ENCODE measurements at regions of chr1 and their contacts with region 1.

Region 1: GRCh38 chr1:32716312-32717148 is 14.0 kb upstream of the SYNC start:
- DNase-seq: peak; percentile 99
- ATAC-seq: peak; percentile 95
- H3K4me3 Mint-ChIP-seq: peak overlapping the region; percentile 45
- H3K27ac Mint-ChIP-seq: peak overlapping the region; percentile 92
- H3K4me1 Mint-ChIP-seq: peaks cover 29% of the 10 kb centered on the region
- H3K27me3 Mint-ChIP-seq: peaks cover 3% of the 10 kb centered on the region
- CTCF ChIP-seq: no peak

Region 2: GRCh38 chr1:32695098-32695904 is 21.2 kb before region 1 on chr1:
- CTCF ChIA-PET with region 1: interaction called, 30 read pairs
- POLR2A ChIA-PET with region 1: no interaction called
- DNase-seq: no peak
- ATAC-seq: peak; percentile 32
- H3K4me3 Mint-ChIP-seq: no peak overlapping the region
- H3K27ac Mint-ChIP-seq: no peak overlapping the region
- H3K4me1 Mint-ChIP-seq: peaks cover 5% of the 10 kb centered on the region
- H3K27me3 Mint-ChIP-seq: peaks cover 2% of the 10 kb centered on the region
- CTCF ChIP-seq: no peak

Region 3: GRCh38 chr1:32733582-32734321 is 17.2 kb after region 1 on chr1:
- CTCF ChIA-PET with region 1: interaction called, 72 read pairs
- POLR2A ChIA-PET with region 1: interaction called, 6 read pairs
- DNase-seq: peak; percentile 49
- ATAC-seq: no peak
- H3K4me3 Mint-ChIP-seq: no peak overlapping the region
- H3K27ac Mint-ChIP-seq: no peak overlapping the region
- H3K4me1 Mint-ChIP-seq: peaks cover 18% of the 10 kb centered on the region
- H3K27me3 Mint-ChIP-seq: peaks cover 25% of the 10 kb centered on the region
- CTCF ChIP-seq: no peak

Region 4: GRCh38 chr1:32753532-32754312 is 37.2 kb after region 1 on chr1:
- CTCF ChIA-PET with region 1: interaction called, 65 read pairs
- POLR2A ChIA-PET with region 1: interaction called, 19 read pairs
- DNase-seq: peak; percentile 89
- ATAC-seq: peak; percentile 83
- H3K4me3 Mint-ChIP-seq: peak overlapping the region; percentile 92
- H3K27ac Mint-ChIP-seq: peak overlapping the region; percentile 92
- H3K4me1 Mint-ChIP-seq: peaks cover 45% of the 10 kb centered on the region
- H3K27me3 Mint-ChIP-seq: no peaks in the 10 kb centered on the region
- CTCF ChIP-seq: no peak

Region 5: DNA sequence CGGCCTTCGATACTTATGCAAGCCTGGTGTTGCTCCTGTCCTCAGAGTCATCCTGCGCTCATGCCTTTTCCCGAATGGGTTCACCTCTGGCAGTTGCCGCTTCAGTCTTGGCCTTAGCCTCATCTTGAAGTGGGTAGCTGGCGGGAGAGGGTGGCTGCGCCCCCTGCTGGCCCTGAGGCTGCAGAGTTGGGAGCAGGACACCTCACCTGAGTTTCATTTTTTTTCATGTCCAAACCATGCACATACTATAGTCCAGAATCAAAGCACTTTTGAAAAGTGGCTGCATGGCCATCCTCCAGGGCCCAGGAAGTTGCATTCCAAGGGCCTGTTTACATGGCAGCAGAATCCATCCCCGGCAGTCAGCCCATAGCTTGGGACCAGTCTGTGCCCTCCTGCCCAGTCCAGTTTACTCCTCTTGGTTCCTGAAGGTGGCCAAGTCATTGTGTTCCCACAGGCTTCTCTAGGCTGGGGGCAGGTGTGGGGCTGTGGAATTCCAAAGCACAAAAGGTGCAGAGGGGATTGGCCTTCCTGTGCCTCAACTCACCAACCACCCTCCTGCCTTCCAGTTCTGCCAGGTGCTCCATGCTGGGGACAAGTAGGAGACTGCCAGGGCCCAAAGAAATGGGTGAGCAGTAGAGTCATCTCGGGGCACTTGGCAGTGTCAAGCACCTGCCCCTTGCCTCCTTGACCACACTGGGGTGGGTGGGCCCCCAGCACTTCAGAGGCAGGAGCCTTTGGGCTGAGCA is 56.7 kb after region 1 on chr1:
- CTCF ChIA-PET with region 1: interaction called, 262 read pairs
- POLR2A ChIA-PET with region 1: interaction called, 39 read pairs
- DNase-seq: peak; percentile 90
- ATAC-seq: peak; percentile 72
- H3K4me3 Mint-ChIP-seq: no peak overlapping the region
- H3K27ac Mint-ChIP-seq: peak overlapping the region; percentile 90
- H3K4me1 Mint-ChIP-seq: peaks cover 28% of the 10 kb centered on the region
- H3K27me3 Mint-ChIP-seq: no peaks in the 10 kb centered on the region
- CTCF ChIP-seq: peak; percentile 91

Region 6: DNA sequence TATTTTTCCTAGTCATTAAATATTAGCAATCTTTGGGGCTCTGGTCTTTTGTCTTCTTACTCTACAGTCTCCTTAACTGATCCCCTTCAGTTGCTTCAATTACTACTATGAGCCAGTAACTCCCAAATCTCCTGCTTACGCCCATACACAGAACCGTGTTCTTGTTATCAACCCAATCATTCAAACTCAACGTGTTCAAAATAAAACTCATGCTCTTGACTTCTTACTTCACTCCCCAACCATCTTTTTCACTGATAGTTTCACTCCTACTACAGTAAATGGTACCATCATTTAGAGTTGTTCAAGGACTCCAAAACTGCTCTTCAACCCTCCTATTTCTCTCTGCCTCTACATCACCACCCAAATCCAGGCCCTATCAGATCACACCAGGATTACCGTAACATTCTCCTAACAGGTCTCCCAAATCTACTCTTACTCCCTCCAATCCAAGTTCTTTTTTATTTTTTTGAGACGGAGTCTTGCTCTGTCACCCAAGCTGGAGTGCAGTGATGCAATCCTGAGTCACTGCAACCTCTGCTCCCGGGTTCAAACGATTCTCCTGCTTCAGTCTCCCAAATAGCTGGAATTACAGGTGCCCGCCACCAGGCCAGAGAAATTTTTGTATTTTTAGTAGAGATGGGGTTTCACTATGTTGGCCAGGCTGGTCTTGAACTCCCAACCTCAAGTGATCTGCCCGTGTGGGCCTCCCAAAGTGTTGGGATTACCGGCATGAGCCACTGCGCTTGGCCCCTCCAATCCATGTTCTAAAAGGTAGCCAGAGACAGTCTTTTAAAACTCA is 97.6 kb after region 1 on chr1:
- CTCF ChIA-PET with region 1: no interaction called
- POLR2A ChIA-PET with region 1: no interaction called
- DNase-seq: no peak
- ATAC-seq: no peak
- H3K4me3 Mint-ChIP-seq: peak overlapping the region; percentile 4; the same call in 1 of the 2 replicates
- H3K27ac Mint-ChIP-seq: peak overlapping the region; percentile 86
- H3K4me1 Mint-ChIP-seq: peaks cover 60% of the 10 kb centered on the region
- H3K27me3 Mint-ChIP-seq: no peaks in the 10 kb centered on the region
- CTCF ChIP-seq: no peak

Region 7: DNA sequence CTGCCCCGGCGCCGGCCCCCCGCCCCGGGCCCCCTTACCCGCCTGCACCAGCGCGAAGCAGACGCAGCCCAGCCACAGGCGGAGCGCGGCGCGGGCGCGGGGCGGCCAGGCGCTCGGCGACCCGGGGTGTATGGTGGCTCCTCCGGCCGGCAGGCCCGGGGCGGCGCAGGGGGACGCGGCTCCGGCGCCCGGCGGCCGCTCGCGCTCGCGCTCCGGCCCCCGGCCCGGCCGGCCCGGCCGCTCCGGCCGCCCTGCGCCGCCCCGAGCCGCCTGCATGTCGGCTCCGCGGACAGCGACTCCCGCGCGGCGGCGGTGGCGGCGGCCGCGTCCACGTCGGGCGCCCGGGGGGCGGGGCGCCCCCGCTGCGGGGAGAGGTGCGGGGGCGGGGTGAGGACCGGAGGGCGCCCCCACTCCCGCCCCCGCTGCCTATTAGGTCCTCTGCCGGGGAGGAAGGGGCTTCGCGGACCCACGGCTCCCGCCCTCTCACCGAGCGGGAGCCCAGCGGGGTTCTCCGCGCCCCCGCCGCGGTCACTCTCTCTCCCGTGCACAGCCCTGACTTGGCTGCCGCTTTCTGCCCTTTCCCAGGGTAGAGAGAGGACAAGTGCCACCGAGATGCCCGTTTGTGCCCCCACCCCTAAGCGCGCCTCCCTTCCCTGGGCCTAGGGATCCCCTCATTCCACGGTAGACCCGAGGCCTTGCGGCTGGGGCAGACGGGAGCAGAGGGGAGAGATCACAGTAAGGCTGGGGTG is 154.3 kb after region 1 on chr1 and contains the start of gene FNDC5:
- CTCF ChIA-PET with region 1: interaction called, 11 read pairs
- POLR2A ChIA-PET with region 1: no interaction called
- DNase-seq: peak; percentile 56
- ATAC-seq: peak; percentile 49
- H3K4me3 Mint-ChIP-seq: peak within 1 kb of the TSS; percentile 76
- H3K27ac Mint-ChIP-seq: no peak within 1 kb of the TSS
- H3K4me1 Mint-ChIP-seq: peaks cover 32% of the 10 kb centered on the region
- H3K27me3 Mint-ChIP-seq: peaks cover 39% of the 10 kb centered on the region
- CTCF ChIP-seq: no peak
- total RNA-seq, gene FNDC5: 1.2 to 1.6 TPM (median 1.4 TPM) in 3 replicates

Measured in WTC11 (cell line).